Activated CD4-positive, alpha-beta memory T cell treated with anti-CD3 and anti-CD28 coated beads, Interleukin-2, amount 10 ng/mL, durations not matched to agents 7 days and 5 days (primary cell): ENCODE measurements at regions of chr12 and their contacts with region 1.

Region 1: DNA sequence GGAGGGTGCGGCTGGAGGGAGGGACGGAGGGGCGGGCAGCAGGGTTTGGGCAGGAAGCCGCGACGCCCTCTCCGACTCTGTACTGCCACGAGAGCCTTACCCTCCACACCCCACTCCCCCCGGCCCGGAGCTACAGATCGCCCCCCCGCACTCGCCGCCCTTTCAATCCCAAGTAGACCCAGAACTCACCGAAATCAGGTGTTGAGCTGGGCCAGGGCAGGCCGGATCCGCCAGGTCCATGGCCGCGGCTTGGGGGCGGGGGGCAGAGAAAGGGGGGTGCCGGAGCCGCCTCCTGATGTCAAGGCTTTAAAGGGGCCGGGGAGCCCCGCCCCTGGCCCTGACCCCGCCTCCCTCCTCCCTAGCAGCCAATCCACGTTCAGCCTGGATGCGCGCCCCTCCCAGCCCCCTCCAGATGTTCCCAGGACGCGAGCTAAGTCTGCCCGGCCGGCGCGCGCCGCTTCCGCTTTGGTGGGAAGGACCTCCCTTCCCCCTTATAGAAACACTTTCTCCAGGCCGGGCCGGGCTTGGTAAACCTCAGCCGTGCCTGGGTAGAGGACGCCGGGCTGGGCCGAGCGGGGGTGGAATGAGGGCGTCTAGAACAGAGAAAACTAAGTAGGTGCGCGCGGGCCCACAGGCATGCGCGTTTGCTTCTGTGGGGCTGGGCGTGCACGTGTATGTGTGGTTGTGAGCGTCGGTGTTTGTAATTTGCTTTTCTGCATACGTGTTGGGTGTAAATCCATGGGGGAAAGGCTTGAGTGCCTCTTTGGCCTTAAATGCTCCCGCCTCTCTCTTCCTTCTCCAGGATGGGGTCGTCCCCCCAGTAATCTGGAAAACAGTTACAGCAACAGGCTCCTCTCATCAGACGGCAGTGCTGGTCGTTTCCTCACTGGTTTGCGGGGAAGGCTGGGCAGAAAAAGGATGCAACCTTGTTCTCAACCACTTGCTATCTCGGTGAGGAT is at the start of gene NCKAP5L:
- DNase-seq: peak; percentile 90
- H3K4me3 Mint-ChIP-seq: peak within 1 kb of the TSS; percentile 79
- H3K27ac Mint-ChIP-seq: peak within 1 kb of the TSS; percentile 26
- H3K4me1 Mint-ChIP-seq: peaks cover 13% of the 10 kb centered on the region
- H3K27me3 Mint-ChIP-seq: peaks cover 32% of the 10 kb centered on the region
- total RNA-seq, gene NCKAP5L: 1.1 to 1.2 TPM

Region 2: GRCh38 chr12:49842519-49843352 is 14.3 kb after region 1 on chr12 and contains the start of gene BCDIN3D:
- CTCF ChIA-PET with region 1: interaction called, 14 read pairs
- POLR2A ChIA-PET with region 1: interaction called, 37 read pairs
- DNase-seq: peak; percentile 93
- H3K4me3 Mint-ChIP-seq: peak within 1 kb of the TSS; percentile 81
- H3K27ac Mint-ChIP-seq: peak within 1 kb of the TSS; percentile 79
- H3K4me1 Mint-ChIP-seq: peaks cover 42% of the 10 kb centered on the region
- H3K27me3 Mint-ChIP-seq: no peaks in the 10 kb centered on the region
- total RNA-seq, gene BCDIN3D: 8.9 to 9.9 TPM